Posterior vena cava (tissue), 2 donors: ENCODE measurements at regions of chr3 and their contacts with region 1.

Region 1: DNA sequence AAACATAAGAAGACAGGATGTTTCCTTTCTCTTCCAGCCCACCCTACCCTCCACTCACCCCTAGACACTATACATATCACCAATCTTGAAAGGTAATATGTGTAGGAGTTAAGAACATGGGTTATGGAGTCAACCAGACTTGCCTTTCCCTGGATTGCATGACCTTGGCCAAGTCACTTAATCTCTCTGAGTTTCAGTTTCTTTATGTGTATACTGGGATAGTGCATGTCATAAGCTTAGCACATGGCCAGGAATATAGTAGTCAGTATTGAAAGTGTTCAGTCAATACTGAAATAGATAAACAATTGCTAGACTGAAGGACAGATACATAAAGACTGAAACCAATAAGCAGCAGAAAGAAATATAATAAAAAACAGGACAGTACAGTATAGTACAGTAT is 283.2 kb upstream of the STT3B start:
- DNase-seq: no peak

Region 2: DNA sequence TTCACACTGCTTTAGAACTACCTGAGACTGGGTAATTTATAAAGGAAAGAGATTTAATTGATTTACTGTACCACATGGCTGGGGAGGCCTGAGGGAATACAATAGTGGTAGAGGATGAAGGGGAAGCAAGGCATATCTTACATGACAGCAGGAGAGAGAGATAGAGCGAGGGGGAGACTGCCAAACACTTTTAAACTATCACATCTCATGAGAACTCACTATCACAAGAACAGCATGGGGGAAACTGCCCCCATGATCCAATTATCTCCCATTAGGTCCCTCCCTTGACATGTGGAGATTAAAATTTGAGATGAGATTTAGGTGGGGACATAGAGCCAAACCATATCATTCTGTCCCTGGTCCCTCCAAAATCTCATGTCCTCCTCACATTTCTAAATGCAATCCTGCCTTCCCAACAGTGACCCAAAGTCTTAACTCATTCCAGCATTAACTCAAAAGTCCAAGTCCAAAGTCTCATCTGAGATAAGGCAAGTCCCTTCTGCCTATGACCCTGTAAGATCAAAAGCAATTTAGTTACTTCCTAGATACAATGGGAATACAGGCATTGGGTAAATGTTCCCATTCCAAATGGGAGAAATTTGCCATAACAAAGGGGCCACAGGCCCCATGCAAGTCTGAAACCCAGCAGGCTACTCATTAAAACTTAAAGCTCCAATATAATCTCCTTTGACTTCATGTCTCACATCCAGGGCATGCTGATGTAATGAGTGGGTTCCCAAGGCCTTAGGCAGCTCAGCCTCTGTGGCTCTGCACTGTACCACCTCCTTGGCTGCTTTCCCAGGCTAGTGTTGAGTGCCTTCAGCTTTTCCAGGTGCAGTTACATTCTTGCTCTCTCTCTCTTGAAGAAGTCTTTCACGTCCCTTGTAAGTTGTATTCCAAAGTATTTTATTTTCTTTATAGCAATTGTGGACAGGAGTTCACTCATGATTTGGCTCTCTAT is 1124.8 kb before region 1 on chr3:
- intact Hi-C with region 1: no loop called
- DNase-seq: no peak

Region 3: DNA sequence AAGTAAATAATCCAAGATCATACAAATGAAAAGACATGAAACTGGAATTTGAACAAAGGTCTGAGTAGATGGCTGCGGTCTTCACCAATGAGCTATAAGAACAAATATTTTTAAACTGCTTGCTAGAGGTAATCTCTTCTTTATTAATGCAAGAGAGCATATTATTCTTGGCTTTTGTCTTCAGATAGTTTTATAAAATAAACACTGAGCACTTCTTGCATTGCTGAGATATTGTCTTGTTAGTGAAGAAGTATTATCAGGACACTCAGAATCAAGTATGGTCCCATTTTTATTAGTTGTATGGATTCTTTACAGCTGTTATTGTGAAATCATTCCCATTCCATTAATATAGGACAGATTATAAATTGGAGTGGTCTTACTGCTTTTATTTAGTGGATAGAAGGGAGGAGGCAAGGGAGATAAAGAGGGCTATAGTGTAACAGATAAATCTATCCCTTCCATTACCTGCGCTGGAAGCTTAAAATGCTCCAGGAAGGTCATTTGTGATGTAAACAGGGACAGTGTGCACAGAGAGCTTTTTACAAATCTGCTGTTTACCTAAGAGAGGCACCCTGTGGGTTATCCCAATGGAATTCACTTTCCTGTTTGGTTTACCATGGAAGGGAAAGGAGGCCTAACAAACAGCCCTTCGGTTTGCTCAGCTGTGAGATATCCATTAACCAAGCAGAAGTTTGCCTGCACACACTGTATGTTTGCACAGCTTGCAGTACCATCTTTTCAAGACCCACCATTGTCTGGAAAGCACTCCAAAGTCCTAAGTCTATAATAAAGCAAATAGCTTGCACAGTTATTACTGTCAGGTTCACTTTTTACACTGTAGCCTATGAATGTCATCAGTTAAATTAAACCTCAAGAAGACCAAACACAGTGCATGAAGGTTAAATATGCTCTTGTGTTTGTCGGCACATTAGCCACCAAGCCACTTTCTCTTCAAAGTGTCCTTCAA is 990.8 kb before region 1 on chr3:
- intact Hi-C with region 1: no loop called
- DNase-seq: no peak

Region 4: DNA sequence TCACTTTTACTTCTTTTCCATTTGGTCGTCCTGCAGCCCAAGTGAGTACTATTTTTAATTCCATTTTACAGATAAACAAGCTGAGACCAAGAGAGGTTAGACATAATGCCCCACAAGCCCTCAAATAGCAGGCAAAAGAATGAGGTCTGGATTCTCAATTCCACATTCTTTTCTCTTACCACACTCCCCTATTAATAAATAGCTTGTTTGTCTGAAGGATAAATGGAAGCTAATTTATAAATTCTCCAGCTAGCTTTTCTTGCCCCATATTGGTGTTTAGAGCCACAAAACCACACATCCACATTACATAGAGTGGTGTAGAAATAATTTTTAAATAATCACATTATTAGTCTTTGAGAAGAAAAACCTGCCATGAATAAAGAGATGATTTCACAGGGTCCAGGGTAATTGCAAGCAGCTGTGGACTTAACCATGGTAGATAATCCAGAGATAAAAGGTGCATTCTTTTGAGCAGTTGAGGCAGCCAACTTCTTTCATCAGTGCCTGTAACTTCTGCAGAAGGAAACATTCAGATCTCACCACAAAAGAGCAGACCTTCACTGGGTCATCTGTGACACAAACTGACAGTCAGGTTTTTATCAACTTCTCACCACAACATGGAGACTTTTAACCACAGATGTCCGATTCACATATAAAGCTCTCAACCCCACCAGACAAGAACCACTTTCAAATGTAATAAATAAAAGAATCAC is 30.3 kb before region 1 on chr3:
- intact Hi-C with region 1: loop called in 1 of 2 experiments (anchors 1 kb)
- DNase-seq: no peak

Region 5: DNA sequence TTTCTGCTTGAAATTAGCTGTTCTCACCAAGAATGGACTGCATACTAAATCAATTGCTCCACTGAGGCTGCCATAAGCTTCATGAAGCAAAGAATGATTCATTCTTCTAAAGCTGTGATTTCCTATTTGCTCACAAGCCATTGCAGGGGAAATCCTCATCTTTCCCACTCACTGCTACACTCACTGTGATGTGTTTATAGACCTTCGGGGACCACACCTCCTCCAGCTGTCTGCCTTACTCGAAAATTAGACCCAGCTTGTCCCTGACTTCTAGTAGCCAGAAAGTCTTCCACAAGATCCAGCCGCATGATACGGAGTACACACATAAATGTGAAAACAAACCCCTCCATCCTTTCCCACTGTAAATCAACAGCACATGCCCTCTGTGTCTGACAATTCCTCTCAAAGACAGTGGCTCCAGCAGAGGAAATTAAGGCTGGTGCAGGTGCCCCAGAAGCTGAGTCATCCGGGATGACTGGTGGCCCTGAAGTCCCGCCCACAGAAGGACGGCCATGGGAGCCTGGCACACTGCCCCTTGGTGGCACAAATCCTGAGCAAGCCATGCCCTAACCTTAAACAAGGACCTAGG is 455.1 kb after region 1 on chr3:
- intact Hi-C with region 1: no loop called
- DNase-seq: no peak

Region 6: DNA sequence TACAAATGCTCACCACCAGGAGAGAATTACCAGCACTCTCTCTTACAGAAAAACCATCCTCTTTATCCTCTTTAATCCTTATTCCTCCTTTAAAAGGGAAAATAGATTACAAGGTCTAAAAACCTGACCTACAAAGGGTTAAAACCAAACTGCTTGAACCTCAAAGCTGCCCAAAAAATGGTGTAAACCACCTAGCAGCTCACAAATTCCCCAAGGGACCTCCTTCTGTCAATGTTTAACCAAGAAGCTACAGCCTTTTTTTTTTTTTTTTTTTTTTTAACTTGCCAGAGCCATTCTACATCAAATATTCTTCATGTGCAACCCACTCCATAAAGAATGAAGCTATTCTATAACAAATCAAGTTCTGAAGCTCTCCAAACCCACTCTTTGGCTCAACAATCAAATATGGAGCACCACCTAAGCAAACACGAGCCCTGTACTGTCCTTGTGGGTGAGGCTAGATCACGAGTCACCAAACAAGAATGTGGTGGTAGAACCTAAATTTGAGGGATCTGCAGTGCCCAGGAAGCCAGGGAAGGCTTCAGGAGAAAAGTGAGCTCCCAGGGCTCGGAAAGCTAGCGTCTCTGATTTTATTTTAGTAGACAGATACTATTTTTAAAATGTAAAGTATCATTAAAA is 711.4 kb after region 1 on chr3:
- intact Hi-C with region 1: no loop called
- DNase-seq: no peak